PC-3 (cell line): ENCODE measurements at regions of chr14 and their contacts with region 1.

Region 1: GRCh38 chr14:21269252-21270046 is at the start of gene HNRNPC:
- DNase-seq: peak; percentile 100
- ATAC-seq: peak; percentile 95
- H3K4me3 ChIP-seq: peak within 1 kb of the TSS; percentile 97
- H3K27ac ChIP-seq: peak within 1 kb of the TSS; percentile 51
- H3K4me1 ChIP-seq: peaks cover 28% of the 10 kb centered on the region
- H3K27me3 ChIP-seq: no peaks in the 10 kb centered on the region
- CTCF ChIP-seq: no peak
- total RNA-seq, gene HNRNPC: 682 and 772 TPM in 2 replicates

Region 2: DNA sequence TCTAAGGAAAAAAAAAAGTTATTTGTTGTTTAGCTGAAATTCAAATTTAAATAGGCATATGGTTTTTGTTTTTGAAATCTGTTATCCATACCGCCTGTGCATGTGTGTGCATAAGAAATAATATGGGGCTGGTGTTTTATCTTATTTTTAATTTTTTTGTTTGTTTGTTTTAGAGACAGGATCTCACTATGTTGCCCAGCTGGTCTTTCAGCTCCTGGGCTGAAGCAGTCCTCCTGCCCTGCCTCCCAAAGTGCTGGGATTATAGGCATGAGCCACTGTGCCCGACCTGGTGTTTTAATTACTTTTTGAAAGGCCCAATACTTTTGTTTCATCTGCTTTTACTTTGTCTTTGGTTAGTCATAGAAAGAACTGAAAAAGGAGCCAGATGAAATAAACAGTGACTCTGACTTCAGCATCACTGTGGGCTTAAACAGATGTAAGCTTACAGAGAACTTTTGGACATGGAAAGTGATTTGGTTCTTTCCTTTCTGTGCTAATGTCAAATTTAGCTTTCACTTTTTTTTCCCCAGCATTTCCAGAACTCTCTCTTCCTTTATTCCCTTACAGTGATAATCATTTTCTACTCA is 77.2 kb after region 1 on chr14:
- CTCF ChIA-PET with region 1: no interaction called
- POLR2A ChIA-PET with region 1: interaction called, 15 read pairs
- intact Hi-C with region 1: no loop called
- DNase-seq: no peak
- ATAC-seq: no peak
- H3K4me3 ChIP-seq: no peak overlapping the region
- H3K27ac ChIP-seq: no peak overlapping the region
- H3K4me1 ChIP-seq: no peaks in the 10 kb centered on the region
- H3K27me3 ChIP-seq: no peaks in the 10 kb centered on the region
- CTCF ChIP-seq: no peak

Region 3: GRCh38 chr14:21383848-21384493 is 114.5 kb after region 1 on chr14 and contains the start of gene SUPT16H:
- CTCF ChIA-PET with region 1: no interaction called
- POLR2A ChIA-PET with region 1: interaction called, 3 read pairs
- intact Hi-C with region 1: loop called (anchors 10 kb)
- DNase-seq: peak; percentile 95
- ATAC-seq: peak; percentile 90
- H3K4me3 ChIP-seq: peak within 1 kb of the TSS; percentile 80
- H3K27ac ChIP-seq: peak within 1 kb of the TSS; percentile 86
- H3K4me1 ChIP-seq: peaks cover 14% of the 10 kb centered on the region
- H3K27me3 ChIP-seq: no peaks in the 10 kb centered on the region
- CTCF ChIP-seq: no peak
- total RNA-seq, gene SUPT16H: 92.6 and 102 TPM in 2 replicates